Psoas muscle (tissue), 8 donors: ENCODE measurements at regions of chr6 and their contacts with region 1.

Region 1: DNA sequence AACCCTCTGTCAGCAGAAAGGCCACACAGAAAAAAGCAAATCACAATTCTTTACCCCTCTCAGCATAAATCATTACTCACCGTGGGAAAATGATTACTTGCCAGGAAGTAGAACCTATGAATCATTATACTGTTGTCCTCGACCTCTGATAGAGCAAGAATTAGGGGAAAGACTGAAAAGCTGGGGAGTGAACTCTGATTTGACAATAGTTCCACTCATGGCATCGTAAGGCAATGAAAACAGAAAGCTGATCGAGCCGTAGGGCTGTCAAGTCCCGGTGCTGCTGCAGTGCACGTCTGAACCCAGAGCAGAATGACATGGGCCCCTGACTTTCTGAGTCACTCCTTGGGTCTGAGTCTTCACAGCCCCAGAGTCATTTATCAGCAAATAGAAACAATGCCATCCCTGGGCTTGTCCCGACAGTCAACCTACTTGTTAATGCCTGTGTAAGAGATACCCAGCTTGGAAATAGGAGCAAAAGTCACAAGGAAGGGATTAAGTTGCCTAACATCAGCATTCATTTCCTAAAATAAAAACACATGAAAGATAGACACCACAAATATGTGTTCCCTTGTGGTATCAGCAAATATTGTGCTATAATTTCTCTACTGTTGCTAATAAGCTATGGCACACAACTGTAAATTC is 224.8 kb upstream of the MARCKS start:
- DNase-seq: peak; percentile 40 to 79
- ATAC-seq: peak; percentile 93 to 96 (median 94)
- H3K4me3 ChIP-seq: peak overlapping the region; percentile 69
- H3K27ac ChIP-seq: peak overlapping the region; percentile 91
- H3K4me1 ChIP-seq: peaks cover 41% of the 10 kb centered on the region
- H3K27me3 ChIP-seq: no peaks in the 10 kb centered on the region
- CTCF ChIP-seq: no peak

Region 2: DNA sequence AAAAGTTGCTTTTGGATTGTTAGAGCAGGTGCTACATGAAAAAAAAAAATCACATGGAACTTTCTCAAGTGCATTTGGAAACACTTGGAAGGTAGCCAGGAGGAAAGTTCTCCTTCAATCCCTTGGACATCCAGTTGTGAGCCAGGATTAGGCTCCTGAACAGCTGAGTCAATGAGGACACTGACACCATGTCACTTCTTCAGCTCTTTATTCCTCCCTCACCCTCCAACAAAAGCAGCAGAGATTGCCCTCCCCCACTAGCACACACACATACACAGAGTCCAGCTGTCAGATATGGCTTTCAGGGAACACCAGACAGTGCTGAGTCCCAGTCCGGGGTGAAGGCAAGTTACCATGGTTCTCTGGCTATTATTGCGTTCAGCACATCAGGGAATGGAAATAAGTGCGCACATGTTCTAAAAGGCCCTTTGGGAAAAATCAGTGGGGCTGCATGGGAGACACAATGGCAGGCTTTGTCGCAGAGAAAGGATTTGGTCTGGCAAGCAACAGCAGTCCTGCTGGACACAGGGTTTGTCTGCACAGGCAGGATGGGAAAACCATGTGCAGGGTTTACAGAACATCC is 100.1 kb after region 1 on chr6:
- intact Hi-C with region 1: loop called in 1 of 2 experiments (anchors 10 kb)
- DNase-seq: peak in 1 of 2 donors; percentile 50
- ATAC-seq: peak; percentile 81 to 96 (median 90)
- H3K4me3 ChIP-seq: peak overlapping the region; percentile 39
- H3K27ac ChIP-seq: peak overlapping the region; percentile 47
- H3K4me1 ChIP-seq: peaks cover 11% of the 10 kb centered on the region
- H3K27me3 ChIP-seq: no peaks in the 10 kb centered on the region
- CTCF ChIP-seq: peak; percentile 28